Mammary epithelial cell (primary cell): ENCODE measurements at regions of chr17 and their contacts with region 1.

Region 1: DNA sequence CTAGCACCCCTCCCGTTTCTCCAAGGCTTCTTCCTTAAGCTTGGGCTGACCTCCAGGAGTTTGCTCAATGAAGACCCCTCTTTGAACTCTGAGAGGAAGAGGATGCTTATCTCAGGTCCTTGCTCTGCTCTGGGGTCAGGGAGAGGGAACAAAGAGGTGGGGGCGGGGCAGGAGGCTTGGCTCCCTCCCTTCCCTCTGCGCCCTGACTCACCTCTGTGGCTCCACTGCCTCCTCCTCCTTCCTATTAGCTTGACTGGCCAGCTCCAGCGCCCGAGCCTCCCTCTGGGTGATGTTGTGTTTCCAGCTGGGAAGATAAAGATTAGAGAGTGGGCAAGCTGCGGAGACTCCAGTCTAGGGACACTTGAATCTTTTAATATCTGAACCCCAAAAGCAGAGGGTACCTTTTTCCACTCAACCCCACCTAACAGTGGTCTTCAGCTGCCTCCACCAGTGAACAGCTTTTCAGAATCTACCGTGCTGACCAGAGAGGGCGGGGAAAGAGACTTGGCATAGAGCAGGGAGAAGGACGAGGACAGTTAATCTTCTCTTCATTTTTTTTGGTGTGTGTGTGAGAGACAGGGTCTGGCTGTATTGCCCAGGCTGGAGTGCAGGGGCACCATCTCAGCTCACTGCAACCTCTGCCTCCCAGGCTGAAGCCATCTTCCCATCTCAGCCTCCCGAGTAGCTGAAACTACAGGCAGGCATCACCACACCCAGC is 6.7 kb downstream of the GIP start:
- DNase-seq: peak; percentile 57
- H3K4me3 ChIP-seq: no peak overlapping the region
- H3K27ac ChIP-seq: no peak overlapping the region
- H3K4me1 ChIP-seq: peaks cover 13% of the 10 kb centered on the region
- H3K27me3 ChIP-seq: no peaks in the 10 kb centered on the region
- CTCF ChIP-seq: no peak

Region 2: GRCh38 chr17:49016788-49017463 is 55.3 kb after region 1 on chr17:
- CTCF ChIA-PET with region 1: no interaction called
- dilution Hi-C with region 1: loop called (anchors 5 kb)
- in situ Hi-C with region 1: no loop called
- intact Hi-C with region 1: no loop called
- DNase-seq: peak; percentile 55
- H3K4me3 ChIP-seq: no peak overlapping the region
- H3K27ac ChIP-seq: no peak overlapping the region
- H3K4me1 ChIP-seq: peaks cover 7% of the 10 kb centered on the region
- H3K27me3 ChIP-seq: peaks cover 35% of the 10 kb centered on the region
- CTCF ChIP-seq: no peak